A549 (cell line): ENCODE measurements at regions of chr15 and their contacts with region 1.

Region 1: DNA sequence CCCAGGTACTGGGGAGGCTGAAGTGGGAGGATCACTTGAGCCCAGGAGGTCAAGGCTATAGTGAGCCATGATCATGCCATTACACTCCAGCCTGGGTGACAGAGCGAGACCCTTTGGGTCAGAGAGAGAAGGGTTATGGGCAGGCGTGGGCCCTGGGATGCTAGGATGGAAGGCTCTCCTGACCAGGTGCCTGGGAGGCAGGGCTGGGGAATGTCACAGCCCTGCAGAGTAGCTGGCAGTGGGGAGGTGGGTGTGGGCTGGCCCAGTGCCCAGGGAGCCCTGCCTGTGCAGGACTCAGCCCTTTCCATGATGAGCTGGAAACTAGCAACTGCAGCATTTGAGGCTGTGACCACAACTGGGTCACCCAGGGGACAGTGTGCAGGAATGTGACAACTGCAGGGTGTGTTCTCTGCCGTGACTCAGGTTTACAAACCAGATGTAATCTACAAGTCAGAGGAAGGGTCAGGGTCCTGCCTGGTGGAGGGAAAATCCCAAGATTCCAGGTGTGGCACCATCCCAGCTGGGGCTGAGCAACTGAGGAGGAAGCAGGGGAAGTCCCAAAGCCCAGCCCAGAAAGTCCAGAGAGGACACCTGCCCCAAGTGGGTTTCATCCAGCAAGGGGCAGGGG is 45.4 kb downstream of the SLC28A1 start:
- DNase-seq: peak; percentile 71 to 95
- ATAC-seq: peak; percentile 67 to 76
- H3K4me3 ChIP-seq: no peak overlapping the region
- H3K27ac ChIP-seq: peak overlapping the region; percentile 54 to 85
- H3K4me1 ChIP-seq: peaks cover 46% of the 10 kb centered on the region
- CTCF ChIP-seq: no peak
- EP300 ChIP-seq: no peak
- POLR2A ChIP-seq: no peak
- RAD21 ChIP-seq: no peak

Region 2: DNA sequence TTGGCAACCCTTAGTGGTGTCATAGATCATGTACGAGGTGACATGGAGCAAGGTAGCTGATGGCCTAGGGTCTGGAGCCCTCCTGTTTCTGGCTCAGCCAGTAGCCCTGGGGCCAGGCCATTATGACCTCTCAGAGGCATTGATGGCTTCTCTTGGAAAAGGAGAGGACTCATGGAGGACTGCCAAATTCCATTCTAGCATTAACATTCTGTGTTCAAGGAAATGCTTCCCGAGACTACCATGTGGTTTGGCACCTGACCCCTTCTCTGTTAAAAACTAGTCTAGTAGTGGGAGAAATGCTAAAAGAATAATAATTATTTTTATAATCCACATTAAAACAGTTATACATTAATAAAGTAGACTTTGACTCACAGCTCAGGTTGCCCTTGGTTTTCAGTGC is 1316.1 kb before region 1 on chr15:
- CTCF ChIA-PET with region 1: no interaction called
- POLR2A ChIA-PET with region 1: no interaction called
- DNase-seq: no peak
- ATAC-seq: no peak
- H3K4me3 ChIP-seq: no peak overlapping the region
- H3K27ac ChIP-seq: no peak overlapping the region
- H3K4me1 ChIP-seq: no peaks in the 10 kb centered on the region
- CTCF ChIP-seq: no peak
- EP300 ChIP-seq: no peak
- POLR2A ChIP-seq: no peak
- RAD21 ChIP-seq: no peak

Region 3: GRCh38 chr15:84588053-84588874 is 341.6 kb before region 1 on chr15:
- CTCF ChIA-PET with region 1: interaction called, 18 read pairs
- POLR2A ChIA-PET with region 1: interaction called, 4 read pairs
- DNase-seq: peak; percentile 93 to 98
- ATAC-seq: peak; percentile 99 to 100
- H3K4me3 ChIP-seq: peak overlapping the region; percentile 33
- H3K27ac ChIP-seq: peak overlapping the region; percentile 66 to 82
- H3K4me1 ChIP-seq: peaks cover 9% of the 10 kb centered on the region; the same call in 2 of the 3 replicates
- CTCF ChIP-seq: peak; percentile 97
- EP300 ChIP-seq: no peak
- POLR2A ChIP-seq: no peak
- RAD21 ChIP-seq: peak; percentile 90 to 99

Region 4: GRCh38 chr15:84658080-84658787 is 271.6 kb before region 1 on chr15 and contains the start of gene NMB:
- CTCF ChIA-PET with region 1: interaction called, 85 read pairs
- POLR2A ChIA-PET with region 1: interaction called, 9 read pairs
- DNase-seq: peak; percentile 89 to 99
- ATAC-seq: peak; percentile 78 to 85
- H3K4me3 ChIP-seq: peak within 1 kb of the TSS; percentile 47
- H3K27ac ChIP-seq: peak within 1 kb of the TSS; percentile 83 to 88
- H3K4me1 ChIP-seq: peaks cover 29% of the 10 kb centered on the region
- CTCF ChIP-seq: peak; percentile 83
- EP300 ChIP-seq: no peak
- POLR2A ChIP-seq: peak; percentile 26
- RAD21 ChIP-seq: peak; percentile 38 to 73
- polyA plus RNA-seq, gene NMB: 10.1 and 16.1 TPM in 2 replicates

Region 5: GRCh38 chr15:84734794-84735479 is 194.9 kb before region 1 on chr15:
- CTCF ChIA-PET with region 1: interaction called, 18 read pairs
- POLR2A ChIA-PET with region 1: interaction called, 5 read pairs
- DNase-seq: peak; percentile 88 to 93
- ATAC-seq: peak; percentile 88 to 95
- H3K4me3 ChIP-seq: peak overlapping the region; percentile 7; the same call in 2 of the 3 replicates
- H3K27ac ChIP-seq: peak overlapping the region; percentile 82 to 91
- H3K4me1 ChIP-seq: peaks cover 41% of the 10 kb centered on the region
- CTCF ChIP-seq: no peak
- EP300 ChIP-seq: peak in 1 of 2 experiments; percentile 43; a peak in 2 of 5 replicates
- POLR2A ChIP-seq: peak; percentile 35
- RAD21 ChIP-seq: peak in 1 of 2 experiments; percentile 36; a peak in 2 of 5 replicates

Region 6: DNA sequence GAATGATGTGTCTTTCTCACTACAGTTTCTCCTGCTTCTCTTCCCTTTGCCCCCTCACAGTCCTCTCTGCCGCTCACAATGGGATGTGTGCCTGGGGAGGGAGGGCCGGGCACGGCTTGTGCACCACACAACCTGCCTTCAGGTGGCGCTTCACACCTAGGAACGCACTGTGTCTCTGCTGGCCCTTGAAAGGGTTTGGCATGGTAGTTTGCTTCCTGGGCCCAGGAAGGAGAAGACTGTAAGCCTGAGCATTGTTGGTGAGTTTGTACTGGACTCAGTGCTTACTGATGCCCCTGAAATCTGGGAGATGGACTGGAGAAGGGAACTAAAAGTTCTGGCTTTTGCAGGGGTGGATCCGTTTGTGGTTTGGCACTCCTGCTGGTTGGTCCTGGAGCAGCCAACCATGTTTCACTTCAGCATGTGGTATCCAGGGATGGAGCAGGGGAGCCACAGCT is 103.5 kb before region 1 on chr15:
- CTCF ChIA-PET with region 1: interaction called, 31 read pairs
- POLR2A ChIA-PET with region 1: no interaction called
- DNase-seq: peak; percentile 74 to 75
- ATAC-seq: peak; percentile 78 to 94
- H3K4me3 ChIP-seq: no peak overlapping the region
- H3K27ac ChIP-seq: peak overlapping the region; percentile 20 to 29; a peak in 2 of 6 replicates
- H3K4me1 ChIP-seq: peaks cover 6% of the 10 kb centered on the region; the same call in 2 of the 3 replicates
- CTCF ChIP-seq: peak; percentile 66
- EP300 ChIP-seq: no peak
- POLR2A ChIP-seq: no peak
- RAD21 ChIP-seq: peak; percentile 86 to 94

Region 7: GRCh38 chr15:84863565-84864443 is 66.1 kb before region 1 on chr15:
- CTCF ChIA-PET with region 1: interaction called, 21 read pairs
- POLR2A ChIA-PET with region 1: no interaction called
- DNase-seq: peak in 1 of 2 experiments; percentile 28
- ATAC-seq: peak in 1 of 2 experiments; percentile 49; a peak in 2 of 6 replicates
- H3K4me3 ChIP-seq: no peak overlapping the region
- H3K27ac ChIP-seq: peak overlapping the region in 1 of 2 experiments; percentile 19; a peak in 1 of 6 replicates
- H3K4me1 ChIP-seq: peaks cover 12% of the 10 kb centered on the region; the same call in 2 of the 3 replicates
- CTCF ChIP-seq: peak; percentile 25; the same call in 2 of the 3 replicates
- EP300 ChIP-seq: no peak
- POLR2A ChIP-seq: no peak
- RAD21 ChIP-seq: peak; percentile 37 to 50; a peak in 4 of 5 replicates

Region 8: GRCh38 chr15:85044251-85044853 is 114.5 kb after region 1 on chr15:
- CTCF ChIA-PET with region 1: interaction called, 11 read pairs
- POLR2A ChIA-PET with region 1: interaction called, 4 read pairs
- DNase-seq: peak; percentile 42 to 89
- ATAC-seq: peak; percentile 52 to 65; a peak in 4 of 6 replicates
- H3K4me3 ChIP-seq: no peak overlapping the region
- H3K27ac ChIP-seq: peak overlapping the region; percentile 90 to 95
- H3K4me1 ChIP-seq: peaks cover 81% of the 10 kb centered on the region
- CTCF ChIP-seq: peak; percentile 88
- EP300 ChIP-seq: no peak
- POLR2A ChIP-seq: no peak
- RAD21 ChIP-seq: peak; percentile 90

Region 9: GRCh38 chr15:85178308-85178707 is 248.4 kb after region 1 on chr15:
- CTCF ChIA-PET with region 1: no interaction called
- POLR2A ChIA-PET with region 1: no interaction called
- DNase-seq: no peak
- ATAC-seq: no peak
- H3K4me3 ChIP-seq: no peak overlapping the region
- H3K27ac ChIP-seq: no peak overlapping the region
- H3K4me1 ChIP-seq: peaks cover 22% of the 10 kb centered on the region
- CTCF ChIP-seq: no peak
- EP300 ChIP-seq: no peak
- POLR2A ChIP-seq: no peak
- RAD21 ChIP-seq: no peak